ENCODE measurements at regions of chr12 and their contacts with region 1.

Region 1: GRCh38 chr12:89621521-89621920 is 87.1 kb downstream of the ATP2B1 start:
- DNase-seq: no peak
- H3K4me3 ChIP-seq: no peak overlapping the region
- H3K27ac ChIP-seq: no peak overlapping the region
- H3K4me1 ChIP-seq: no peaks in the 10 kb centered on the region
- CTCF ChIP-seq: no peak

Region 2: GRCh38 chr12:89593233-89593632 is 28.3 kb before region 1 on chr12:
- CTCF ChIA-PET with region 1: no interaction called
- POLR2A ChIA-PET with region 1: no interaction called
- intact Hi-C with region 1: no loop called
- DNase-seq: no peak
- H3K4me3 ChIP-seq: no peak overlapping the region
- H3K27ac ChIP-seq: no peak overlapping the region
- H3K4me1 ChIP-seq: no peaks in the 10 kb centered on the region
- CTCF ChIP-seq: no peak

Region 3: DNA sequence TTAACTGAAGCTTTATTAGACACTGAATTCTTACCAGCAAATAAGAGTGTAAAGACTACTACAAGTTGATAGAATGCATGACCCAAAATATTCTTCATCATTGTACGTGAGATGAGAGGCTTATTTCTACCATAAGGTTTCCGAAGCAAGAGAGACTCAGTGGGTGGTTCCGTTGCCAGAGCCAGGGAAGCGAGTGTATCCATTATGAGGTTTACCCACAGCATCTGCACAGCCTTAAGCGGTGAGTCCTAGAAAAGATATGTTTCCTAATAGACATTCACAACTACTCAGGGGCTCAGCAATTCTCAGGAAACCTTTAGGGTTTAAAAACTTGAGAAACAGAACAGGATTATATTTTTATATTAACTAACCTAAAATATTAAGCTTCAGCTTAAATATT is 17.8 kb before region 1 on chr12:
- CTCF ChIA-PET with region 1: no interaction called
- POLR2A ChIA-PET with region 1: interaction called, 11 read pairs
- intact Hi-C with region 1: no loop called
- DNase-seq: no peak
- H3K4me3 ChIP-seq: no peak overlapping the region
- H3K27ac ChIP-seq: no peak overlapping the region
- H3K4me1 ChIP-seq: no peaks in the 10 kb centered on the region
- CTCF ChIP-seq: no peak

Region 4: GRCh38 chr12:89636052-89636775 is 14.7 kb after region 1 on chr12:
- CTCF ChIA-PET with region 1: no interaction called
- POLR2A ChIA-PET with region 1: interaction called, 15 read pairs
- intact Hi-C with region 1: no loop called
- DNase-seq: no peak
- H3K4me3 ChIP-seq: no peak overlapping the region
- H3K27ac ChIP-seq: no peak overlapping the region
- H3K4me1 ChIP-seq: no peaks in the 10 kb centered on the region
- CTCF ChIP-seq: no peak

Region 5: DNA sequence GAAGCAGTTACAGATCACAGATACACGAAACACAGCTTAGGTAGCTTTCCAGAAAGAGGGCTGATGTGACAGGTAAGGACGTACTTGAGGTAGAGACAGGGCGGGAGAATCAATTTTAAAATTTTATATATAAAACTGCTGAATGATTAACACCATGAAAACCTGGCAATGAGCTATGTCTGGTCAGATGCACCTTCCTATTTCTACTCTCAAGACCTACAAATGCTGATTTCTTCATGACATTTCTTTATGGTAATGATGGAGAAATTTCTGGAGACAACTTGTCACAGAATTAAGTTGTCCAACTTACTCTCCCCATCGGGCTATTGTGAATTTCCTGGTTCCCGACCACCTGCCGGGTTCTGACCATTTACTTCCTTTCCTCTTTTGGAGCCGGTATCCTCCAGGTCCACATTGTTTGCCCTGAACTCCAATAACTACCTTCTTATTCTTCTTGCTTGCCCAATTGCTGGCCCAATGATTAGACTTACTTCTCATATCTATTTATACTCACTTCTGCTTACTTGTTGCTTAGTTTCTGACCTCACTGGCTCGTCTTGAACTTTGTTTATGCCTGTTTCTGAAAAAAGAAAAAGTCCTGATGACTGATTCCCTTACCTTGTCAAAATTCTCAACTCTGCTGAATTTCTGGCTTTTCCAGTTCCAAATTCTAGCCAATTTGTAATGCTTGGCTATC is 99.9 kb after region 1 on chr12:
- CTCF ChIA-PET with region 1: no interaction called
- POLR2A ChIA-PET with region 1: no interaction called
- intact Hi-C with region 1: no loop called
- DNase-seq: peak; percentile 25
- H3K4me3 ChIP-seq: peak overlapping the region; percentile 35
- H3K27ac ChIP-seq: no peak overlapping the region
- H3K4me1 ChIP-seq: peaks cover 13% of the 10 kb centered on the region
- CTCF ChIP-seq: no peak

Measured in OCI-LY7 (cell line).